ENCODE measurements at regions of chr14 and their contacts with region 1.

Region 1: GRCh38 chr14:71753126-71753830 is 179.0 kb upstream of the RGS6 start:
- DNase-seq: peak; percentile 73
- H3K27ac ChIP-seq: peak overlapping the region; percentile 32
- CTCF ChIP-seq: peak; percentile 86

Region 2: GRCh38 chr14:71138448-71139293 is 614.6 kb before region 1 on chr14:
- CTCF ChIA-PET with region 1: interaction called, 24 read pairs
- POLR2A ChIA-PET with region 1: no interaction called
- DNase-seq: peak; percentile 63
- H3K27ac ChIP-seq: no peak overlapping the region
- CTCF ChIP-seq: peak; percentile 91

Region 3: GRCh38 chr14:71320734-71321573 is 432.3 kb before region 1 on chr14:
- CTCF ChIA-PET with region 1: interaction called, 10 read pairs
- POLR2A ChIA-PET with region 1: no interaction called
- DNase-seq: peak; percentile 61
- H3K27ac ChIP-seq: peak overlapping the region; percentile 91
- CTCF ChIP-seq: no peak

Measured in RWPE1 (cell line).